MCF 10A (cell line): ENCODE measurements at regions of chr9 and their contacts with region 1.

Region 1: GRCh38 chr9:35814841-35815543 is at the start of gene HINT2:
- DNase-seq: peak; percentile 99
- H3K4me3 Mint-ChIP-seq: peak within 1 kb of the TSS; percentile 87
- H3K27ac Mint-ChIP-seq: peak within 1 kb of the TSS; percentile 84
- H3K4me1 Mint-ChIP-seq: peaks cover 22% of the 10 kb centered on the region
- H3K27me3 Mint-ChIP-seq: peaks cover 11% of the 10 kb centered on the region
- CTCF ChIP-seq: no peak
- total RNA-seq, gene HINT2: 45.4 and 48.2 TPM in 2 replicates

Region 2: GRCh38 chr9:35639631-35640030 is 175.4 kb before region 1 on chr9:
- CTCF ChIA-PET with region 1: no interaction called
- POLR2A ChIA-PET with region 1: no interaction called
- intact Hi-C with region 1: no loop called
- DNase-seq: no peak
- H3K4me3 Mint-ChIP-seq: no peak overlapping the region
- H3K27ac Mint-ChIP-seq: no peak overlapping the region
- H3K4me1 Mint-ChIP-seq: peaks cover 4% of the 10 kb centered on the region
- H3K27me3 Mint-ChIP-seq: no peaks in the 10 kb centered on the region
- CTCF ChIP-seq: no peak

Region 3: DNA sequence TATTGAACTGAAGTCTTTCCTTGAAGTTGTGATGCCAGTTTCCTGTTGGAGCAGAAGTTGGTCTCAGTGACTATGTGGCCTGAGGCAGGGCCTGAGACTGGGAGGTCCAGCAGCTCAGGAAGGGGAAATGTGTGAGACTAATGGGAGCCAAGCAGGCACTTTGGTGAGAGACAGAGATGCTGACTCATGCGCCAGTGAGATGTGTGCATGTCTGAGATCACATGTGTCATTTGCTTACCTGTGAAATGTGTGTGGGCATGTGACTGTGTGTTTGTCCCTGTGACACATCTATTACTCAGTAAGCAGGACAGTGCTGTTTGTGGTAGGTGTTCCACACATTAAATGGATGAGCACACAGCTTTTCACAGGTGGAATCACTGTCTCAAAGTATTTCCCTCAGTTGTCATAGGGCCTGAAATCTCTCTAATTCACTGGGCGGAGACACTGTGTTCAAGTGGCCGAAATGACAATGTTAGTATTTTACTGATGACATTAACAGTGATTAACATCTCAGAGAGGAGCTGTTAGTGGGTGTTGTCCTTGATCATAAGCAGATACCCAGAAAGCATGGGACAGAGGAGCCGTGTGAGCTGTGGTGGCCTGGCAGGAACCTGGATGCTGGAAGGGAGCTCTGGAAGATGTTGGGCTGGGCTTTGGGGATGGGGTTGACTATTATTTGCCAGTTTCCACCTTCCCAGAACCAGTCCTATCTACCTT is 16.2 kb before region 1 on chr9:
- CTCF ChIA-PET with region 1: interaction called, 11 read pairs
- POLR2A ChIA-PET with region 1: interaction called, 16 read pairs
- intact Hi-C with region 1: no loop called
- DNase-seq: peak; percentile 68
- H3K4me3 Mint-ChIP-seq: no peak overlapping the region
- H3K27ac Mint-ChIP-seq: peak overlapping the region; percentile 50
- H3K4me1 Mint-ChIP-seq: peaks cover 21% of the 10 kb centered on the region
- H3K27me3 Mint-ChIP-seq: no peaks in the 10 kb centered on the region
- CTCF ChIP-seq: no peak

Region 4: DNA sequence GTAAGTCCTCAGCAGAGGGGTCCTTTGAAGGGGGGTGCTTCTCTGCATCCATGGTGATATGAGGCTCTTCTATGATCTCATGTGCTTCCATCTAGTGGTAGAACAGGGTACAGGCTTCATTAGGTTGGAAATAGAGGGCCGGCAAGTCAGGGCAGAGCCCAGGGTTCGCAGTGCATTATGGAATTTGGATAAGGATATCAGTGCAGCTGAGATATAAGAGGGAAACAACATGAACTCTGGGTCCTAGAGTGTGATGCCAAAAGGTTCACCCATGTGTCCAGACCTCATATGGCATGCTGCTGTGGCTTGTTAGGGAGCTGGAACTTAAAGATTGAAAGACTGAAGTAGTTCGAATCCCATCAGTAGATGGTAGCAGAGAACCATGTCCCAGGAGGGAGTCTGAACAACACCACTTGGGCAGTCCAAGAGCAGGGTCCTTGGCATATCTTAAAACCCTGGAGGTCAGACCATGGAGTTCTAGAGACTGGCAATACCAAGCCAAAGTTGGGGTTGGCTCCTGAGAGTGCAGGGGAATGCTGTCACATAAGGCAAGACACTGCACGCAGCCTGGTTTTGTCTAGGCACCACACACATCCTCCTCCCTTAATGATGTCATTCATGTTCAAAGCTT is 11.2 kb after region 1 on chr9:
- CTCF ChIA-PET with region 1: interaction called, 12 read pairs
- POLR2A ChIA-PET with region 1: interaction called, 14 read pairs
- intact Hi-C with region 1: no loop called
- DNase-seq: peak; percentile 73
- H3K4me3 Mint-ChIP-seq: no peak overlapping the region
- H3K27ac Mint-ChIP-seq: peak overlapping the region; percentile 46
- H3K4me1 Mint-ChIP-seq: peaks cover 40% of the 10 kb centered on the region
- H3K27me3 Mint-ChIP-seq: no peaks in the 10 kb centered on the region
- CTCF ChIP-seq: peak; percentile 60

Region 5: GRCh38 chr9:35882263-35882848 is 67.4 kb after region 1 on chr9:
- CTCF ChIA-PET with region 1: interaction called, 10 read pairs
- POLR2A ChIA-PET with region 1: interaction called, 7 read pairs
- intact Hi-C with region 1: loop called (anchors 1 kb)
- DNase-seq: peak; percentile 80
- H3K4me3 Mint-ChIP-seq: no peak overlapping the region
- H3K27ac Mint-ChIP-seq: no peak overlapping the region
- H3K4me1 Mint-ChIP-seq: peaks cover 6% of the 10 kb centered on the region
- H3K27me3 Mint-ChIP-seq: peaks cover 16% of the 10 kb centered on the region
- CTCF ChIP-seq: peak; percentile 95